ENCODE measurements at regions of chr6 and their contacts with region 1.

Region 1: GRCh38 chr6:129490521-129491245 is 219.3 kb downstream of the ARHGAP18 start:
- DNase-seq: peak; percentile 68
- ATAC-seq: peak; percentile 89
- H3K4me3 ChIP-seq: 0 out of 2 replicates have a peak overlapping the region, but pooled peaks have one; percentile 1
- H3K27ac ChIP-seq: peak overlapping the region; percentile 88
- H3K4me1 ChIP-seq: peaks cover 23% of the 10 kb centered on the region
- H3K27me3 ChIP-seq: no peaks in the 10 kb centered on the region
- CTCF ChIP-seq: no peak
- EP300 ChIP-seq: peak in 1 of 2 experiments; percentile 72; a peak in 1 of 4 replicates
- POLR2A ChIP-seq: no peak
- RAD21 ChIP-seq: no peak

Region 2: DNA sequence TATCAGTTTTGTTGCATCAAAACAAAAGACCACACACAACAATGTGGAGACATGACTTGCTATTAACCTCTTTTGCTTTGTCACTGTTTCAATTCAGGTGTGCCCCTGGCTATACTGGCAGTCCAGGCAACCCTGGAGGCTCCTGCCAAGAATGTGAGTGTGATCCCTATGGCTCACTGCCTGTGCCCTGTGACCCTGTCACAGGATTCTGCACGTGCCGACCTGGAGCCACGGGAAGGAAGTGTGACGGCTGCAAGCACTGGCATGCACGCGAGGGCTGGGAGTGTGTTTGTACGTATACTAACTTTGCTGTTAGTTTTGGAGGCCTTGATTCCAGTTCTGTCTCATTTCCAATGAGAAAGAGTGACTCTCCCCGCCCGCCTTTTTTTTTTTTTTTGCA is 137.6 kb before region 1 on chr6:
- CTCF ChIA-PET with region 1: no interaction called
- POLR2A ChIA-PET with region 1: no interaction called
- RAD21 ChIA-PET with region 1: no interaction called
- SMC1A ChIA-PET with region 1: no interaction called
- in situ Hi-C with region 1: no loop called
- intact Hi-C with region 1: no loop called
- DNase-seq: no peak
- ATAC-seq: no peak
- H3K4me3 ChIP-seq: no peak overlapping the region
- H3K27ac ChIP-seq: no peak overlapping the region
- H3K4me1 ChIP-seq: no peaks in the 10 kb centered on the region
- H3K27me3 ChIP-seq: no peaks in the 10 kb centered on the region
- CTCF ChIP-seq: no peak
- EP300 ChIP-seq: no peak
- POLR2A ChIP-seq: no peak
- RAD21 ChIP-seq: no peak

Region 3: DNA sequence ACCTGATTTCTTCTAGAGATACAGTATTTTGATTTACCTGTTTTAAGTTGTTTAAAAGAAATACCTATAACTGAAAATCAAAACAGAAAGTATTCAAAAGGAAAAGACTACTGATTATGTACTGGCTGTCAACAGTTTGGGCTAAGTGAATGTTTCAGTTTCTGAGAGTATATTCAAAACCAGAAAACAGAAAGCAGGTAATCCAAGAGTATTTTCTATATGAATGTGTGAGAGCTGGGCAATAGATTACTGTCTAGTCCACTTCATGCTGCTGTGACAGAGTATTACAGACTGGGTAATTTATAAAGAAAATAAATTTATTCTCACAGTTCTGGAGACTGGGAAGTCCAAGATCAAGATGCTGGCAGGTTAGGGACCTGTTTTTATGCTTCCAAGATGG is 41.7 kb before region 1 on chr6:
- CTCF ChIA-PET with region 1: no interaction called
- POLR2A ChIA-PET with region 1: no interaction called
- RAD21 ChIA-PET with region 1: no interaction called
- SMC1A ChIA-PET with region 1: no interaction called
- in situ Hi-C with region 1: no loop called
- intact Hi-C with region 1: loop called (anchors 2 kb)
- DNase-seq: peak; percentile 16
- ATAC-seq: peak; percentile 98
- H3K4me3 ChIP-seq: no peak overlapping the region
- H3K27ac ChIP-seq: no peak overlapping the region
- H3K4me1 ChIP-seq: peaks cover 8% of the 10 kb centered on the region; the same call in 1 of the 2 replicates
- H3K27me3 ChIP-seq: peaks cover 2 to 16% of the 10 kb centered on the region in 2 experiments; a peak in 3 of 4 replicates
- CTCF ChIP-seq: no peak
- EP300 ChIP-seq: 0 out of 4 replicates have a peak, but pooled peaks of 1 of the 2 experiments have one; percentile 14
- POLR2A ChIP-seq: no peak
- RAD21 ChIP-seq: no peak

Region 4: DNA sequence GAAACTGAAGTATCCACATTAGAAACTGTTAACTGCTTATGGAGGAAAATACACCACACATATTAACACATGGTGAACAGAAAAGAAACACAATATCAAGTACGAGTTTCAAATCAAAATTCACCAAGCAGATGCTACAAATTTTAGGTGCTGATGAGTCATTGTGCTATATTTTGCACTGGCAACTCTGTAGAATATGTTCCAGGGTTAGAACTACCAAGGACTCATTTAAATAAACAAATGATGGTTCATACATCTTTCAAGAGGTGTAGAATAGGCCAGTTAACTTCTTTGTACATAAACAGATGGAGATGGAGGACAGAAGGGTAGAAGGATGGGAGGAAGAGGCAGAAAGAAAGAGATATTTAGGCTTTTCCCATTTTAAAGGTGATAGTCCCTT is 34.4 kb after region 1 on chr6:
- CTCF ChIA-PET with region 1: no interaction called
- POLR2A ChIA-PET with region 1: no interaction called
- RAD21 ChIA-PET with region 1: no interaction called
- SMC1A ChIA-PET with region 1: no interaction called
- in situ Hi-C with region 1: no loop called
- intact Hi-C with region 1: no loop called
- DNase-seq: no peak
- ATAC-seq: no peak
- H3K4me3 ChIP-seq: no peak overlapping the region
- H3K27ac ChIP-seq: no peak overlapping the region
- H3K4me1 ChIP-seq: no peaks in the 10 kb centered on the region
- H3K27me3 ChIP-seq: no peaks in the 10 kb centered on the region
- CTCF ChIP-seq: no peak
- EP300 ChIP-seq: no peak
- POLR2A ChIP-seq: no peak
- RAD21 ChIP-seq: no peak

Measured in GM12878 (cell line).